Naive thymus-derived CD4-positive, alpha-beta T cell (primary cell): ENCODE measurements at regions of chr6 and their contacts with region 1.

Region 1: DNA sequence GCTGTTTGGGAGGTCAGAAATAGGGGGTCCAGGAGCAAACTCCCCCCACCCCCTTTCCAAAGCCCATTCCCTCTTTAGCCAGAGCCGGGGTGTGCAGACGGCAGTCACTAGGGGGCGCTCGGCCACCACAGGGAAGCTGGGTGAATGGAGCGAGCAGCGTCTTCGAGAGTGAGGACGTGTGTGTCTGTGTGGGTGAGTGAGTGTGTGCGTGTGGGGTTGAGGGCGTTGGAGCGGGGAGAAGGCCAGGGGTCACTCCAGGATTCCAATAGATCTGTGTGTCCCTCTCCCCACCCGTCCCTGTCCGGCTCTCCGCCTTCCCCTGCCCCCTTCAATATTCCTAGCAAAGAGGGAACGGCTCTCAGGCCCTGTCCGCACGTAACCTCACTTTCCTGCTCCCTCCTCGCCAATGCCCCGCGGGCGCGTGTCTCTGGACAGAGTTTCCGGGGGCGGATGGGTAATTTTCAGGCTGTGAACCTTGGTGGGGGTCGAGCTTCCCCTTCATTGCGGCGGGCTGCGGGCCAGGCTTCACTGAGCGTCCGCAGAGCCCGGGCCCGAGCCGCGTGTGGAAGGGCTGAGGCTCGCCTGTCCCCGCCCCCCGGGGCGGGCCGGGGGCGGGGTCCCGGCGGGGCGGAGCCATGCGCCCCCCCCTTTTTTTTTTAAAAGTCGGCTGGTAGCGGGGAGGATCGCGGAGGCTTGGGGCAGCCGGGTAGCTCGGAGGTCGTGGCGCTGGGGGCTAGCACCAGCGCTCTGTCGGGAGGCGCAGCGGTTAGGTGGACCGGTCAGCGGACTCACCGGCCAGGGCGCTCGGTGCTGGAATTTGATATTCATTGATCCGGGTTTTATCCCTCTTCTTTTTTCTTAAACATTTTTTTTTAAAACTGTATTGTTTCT is at the start of gene VEGFA:
- DNase-seq: peak; percentile 79 to 93 (median 86)
- ATAC-seq: peak; percentile 91
- H3K4me3 ChIP-seq: peak within 1 kb of the TSS; percentile 73
- H3K4me3 Mint-ChIP-seq: peak within 1 kb of the TSS; percentile 88 to 99 (median 94)
- H3K27ac ChIP-seq: peak within 1 kb of the TSS; percentile 45
- H3K27ac Mint-ChIP-seq: peak within 1 kb of the TSS in 8 of 9 donors; percentile 70 to 85 (median 84)
- H3K4me1 ChIP-seq: peaks cover 3 to 4% of the 10 kb centered on the region in 2 donors
- H3K4me1 Mint-ChIP-seq: peaks cover 8 to 34% (median 16%) of the 10 kb centered on the region in 7 donors
- H3K27me3 ChIP-seq: peaks cover 6 to 8% of the 10 kb centered on the region in 2 donors
- H3K27me3 Mint-ChIP-seq: peaks cover 7 to 21% (median 16%) of the 10 kb centered on the region in 5 donors
- total RNA-seq, gene VEGFA: 0.60 to 72.1 (median 19.4) TPM

Region 2: GRCh38 chr6:43516697-43517504 is 252.9 kb before region 1 on chr6 and contains the starts of genes POLR1C and YIPF3:
- CTCF ChIA-PET with region 1: no interaction called
- POLR2A ChIA-PET with region 1: no interaction called
- intact Hi-C with region 1: loop called in 1 of 2 experiments (anchors 5 kb)
- DNase-seq: peak; percentile 83 to 97 (median 96)
- ATAC-seq: peak; percentile 95
- H3K4me3 ChIP-seq: peak within 1 kb of the TSS; percentile 100
- H3K4me3 Mint-ChIP-seq: no peak within 1 kb of the TSS
- H3K27ac ChIP-seq: peak within 1 kb of the TSS; percentile 96
- H3K27ac Mint-ChIP-seq: no peak within 1 kb of the TSS
- H3K4me1 ChIP-seq: peaks cover 32 to 36% of the 10 kb centered on the region in 2 donors
- H3K4me1 Mint-ChIP-seq: peaks cover 8 to 36% (median 31%) of the 10 kb centered on the region in 7 donors
- H3K27me3 ChIP-seq: no peaks in the 10 kb centered on the region
- H3K27me3 Mint-ChIP-seq: no peaks in the 10 kb centered on the region
- total RNA-seq, gene POLR1C: 36.3 to 61.1 (median 40.9) TPM
- total RNA-seq, gene YIPF3: 54.4 to 75.9 (median 67.3) TPM

Region 3: DNA sequence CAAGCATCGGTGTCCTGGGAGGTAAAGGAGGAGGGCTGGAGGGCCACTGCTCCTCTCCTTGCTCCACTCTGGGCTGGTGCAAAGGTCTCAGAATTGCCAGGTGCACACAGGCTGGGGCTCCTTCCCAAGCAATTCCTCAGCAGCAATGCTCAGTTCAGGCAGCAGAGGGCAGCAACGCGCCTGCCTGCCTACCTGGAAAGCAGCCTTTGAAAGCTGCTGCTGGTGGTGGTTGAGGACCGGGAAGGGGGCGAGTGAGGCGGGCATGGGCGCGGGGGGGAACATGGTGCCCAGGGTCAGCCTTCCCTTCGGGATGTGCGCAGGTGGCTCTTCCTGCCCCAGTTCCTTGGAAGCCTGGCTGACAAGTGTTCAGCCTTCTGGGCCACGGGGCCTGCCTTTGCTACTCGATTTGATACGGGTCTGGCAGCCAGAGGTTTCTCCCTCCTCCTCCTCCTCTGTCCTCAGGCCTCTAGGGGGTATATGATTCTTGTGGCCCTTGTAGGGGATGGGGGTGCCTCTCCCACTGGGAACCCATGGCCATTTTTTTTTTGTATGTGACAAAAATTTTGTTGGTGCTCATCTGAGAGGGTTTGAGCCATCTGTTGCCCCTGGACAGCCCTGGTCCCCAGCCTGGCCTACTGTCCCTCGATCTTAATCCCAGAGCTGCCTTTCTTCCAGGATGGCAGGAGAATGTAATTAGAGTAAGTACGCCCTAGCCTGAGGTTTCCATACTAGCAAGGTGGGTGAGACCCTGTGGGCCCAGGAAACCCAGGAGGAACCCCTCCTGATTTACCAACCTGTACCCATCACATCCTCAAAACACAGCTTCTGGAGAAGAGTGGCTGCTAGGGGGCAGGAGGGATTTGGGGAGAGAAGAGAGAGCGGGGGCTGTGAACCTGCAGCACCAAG is 102.3 kb before region 1 on chr6:
- CTCF ChIA-PET with region 1: interaction called, 3 read pairs
- POLR2A ChIA-PET with region 1: no interaction called
- intact Hi-C with region 1: loop called (anchors 1 to 2 kb)
- DNase-seq: peak; percentile 63 to 85 (median 77)
- ATAC-seq: peak; percentile 87
- H3K4me3 ChIP-seq: no peak overlapping the region
- H3K4me3 Mint-ChIP-seq: peak overlapping the region in 9 of 10 donors; percentile 23 to 79 (median 64)
- H3K27ac ChIP-seq: peak overlapping the region; percentile 10
- H3K27ac Mint-ChIP-seq: peak overlapping the region in 7 of 9 donors; percentile 22 to 89 (median 68)
- H3K4me1 ChIP-seq: peaks cover 8 to 9% of the 10 kb centered on the region in 2 donors
- H3K4me1 Mint-ChIP-seq: peaks cover 14 to 45% (median 18%) of the 10 kb centered on the region in 7 donors
- H3K27me3 ChIP-seq: no peaks in the 10 kb centered on the region
- H3K27me3 Mint-ChIP-seq: no peaks in the 10 kb centered on the region

Region 4: GRCh38 chr6:43723737-43724295 is 46.0 kb before region 1 on chr6:
- CTCF ChIA-PET with region 1: interaction called, 23 read pairs
- POLR2A ChIA-PET with region 1: interaction called, 3 read pairs
- intact Hi-C with region 1: loop called (anchors 1 kb)
- DNase-seq: peak; percentile 42 to 68 (median 60)
- ATAC-seq: peak; percentile 77
- H3K4me3 ChIP-seq: no peak overlapping the region
- H3K4me3 Mint-ChIP-seq: peak overlapping the region in 3 of 10 donors; percentile 55 to 67 (median 66)
- H3K27ac ChIP-seq: no peak overlapping the region
- H3K27ac Mint-ChIP-seq: peak overlapping the region in 3 of 9 donors; percentile 3 to 97 (median 67)
- H3K4me1 ChIP-seq: peaks cover 19 to 23% of the 10 kb centered on the region in 2 donors
- H3K4me1 Mint-ChIP-seq: peaks cover 20 to 38% (median 29%) of the 10 kb centered on the region in 7 donors
- H3K27me3 ChIP-seq: no peaks in the 10 kb centered on the region
- H3K27me3 Mint-ChIP-seq: peaks cover 0 to 7% (median 0%) of the 10 kb centered on the region in 5 donors

Region 5: GRCh38 chr6:43749461-43749860 is 20.3 kb before region 1 on chr6:
- CTCF ChIA-PET with region 1: no interaction called
- POLR2A ChIA-PET with region 1: no interaction called
- intact Hi-C with region 1: no loop called
- DNase-seq: peak in 1 of 9 donors; percentile 10
- ATAC-seq: no peak
- H3K4me3 ChIP-seq: no peak overlapping the region
- H3K4me3 Mint-ChIP-seq: no peak overlapping the region
- H3K27ac ChIP-seq: no peak overlapping the region
- H3K27ac Mint-ChIP-seq: no peak overlapping the region
- H3K4me1 ChIP-seq: no peaks in the 10 kb centered on the region
- H3K4me1 Mint-ChIP-seq: peaks cover 0 to 2% (median 0%) of the 10 kb centered on the region in 7 donors
- H3K27me3 ChIP-seq: no peaks in the 10 kb centered on the region
- H3K27me3 Mint-ChIP-seq: peaks cover 0 to 25% (median 8%) of the 10 kb centered on the region in 5 donors

Region 6: GRCh38 chr6:44002593-44003344 is 233.0 kb after region 1 on chr6:
- CTCF ChIA-PET with region 1: no interaction called
- POLR2A ChIA-PET with region 1: no interaction called
- intact Hi-C with region 1: loop called (anchors 2 to 5 kb)
- DNase-seq: peak; percentile 18 to 75 (median 45)
- ATAC-seq: peak; percentile 69
- H3K4me3 ChIP-seq: peak overlapping the region; percentile 44
- H3K4me3 Mint-ChIP-seq: peak overlapping the region; percentile 58 to 81 (median 74)
- H3K27ac ChIP-seq: no peak overlapping the region
- H3K27ac Mint-ChIP-seq: no peak overlapping the region
- H3K4me1 ChIP-seq: peaks cover 3 to 4% of the 10 kb centered on the region in 2 donors
- H3K4me1 Mint-ChIP-seq: peaks cover 0 to 20% (median 8%) of the 10 kb centered on the region in 7 donors
- H3K27me3 ChIP-seq: peaks cover 0 to 5% of the 10 kb centered on the region in 2 donors
- H3K27me3 Mint-ChIP-seq: peaks cover 22 to 46% (median 37%) of the 10 kb centered on the region in 5 donors

Region 7: DNA sequence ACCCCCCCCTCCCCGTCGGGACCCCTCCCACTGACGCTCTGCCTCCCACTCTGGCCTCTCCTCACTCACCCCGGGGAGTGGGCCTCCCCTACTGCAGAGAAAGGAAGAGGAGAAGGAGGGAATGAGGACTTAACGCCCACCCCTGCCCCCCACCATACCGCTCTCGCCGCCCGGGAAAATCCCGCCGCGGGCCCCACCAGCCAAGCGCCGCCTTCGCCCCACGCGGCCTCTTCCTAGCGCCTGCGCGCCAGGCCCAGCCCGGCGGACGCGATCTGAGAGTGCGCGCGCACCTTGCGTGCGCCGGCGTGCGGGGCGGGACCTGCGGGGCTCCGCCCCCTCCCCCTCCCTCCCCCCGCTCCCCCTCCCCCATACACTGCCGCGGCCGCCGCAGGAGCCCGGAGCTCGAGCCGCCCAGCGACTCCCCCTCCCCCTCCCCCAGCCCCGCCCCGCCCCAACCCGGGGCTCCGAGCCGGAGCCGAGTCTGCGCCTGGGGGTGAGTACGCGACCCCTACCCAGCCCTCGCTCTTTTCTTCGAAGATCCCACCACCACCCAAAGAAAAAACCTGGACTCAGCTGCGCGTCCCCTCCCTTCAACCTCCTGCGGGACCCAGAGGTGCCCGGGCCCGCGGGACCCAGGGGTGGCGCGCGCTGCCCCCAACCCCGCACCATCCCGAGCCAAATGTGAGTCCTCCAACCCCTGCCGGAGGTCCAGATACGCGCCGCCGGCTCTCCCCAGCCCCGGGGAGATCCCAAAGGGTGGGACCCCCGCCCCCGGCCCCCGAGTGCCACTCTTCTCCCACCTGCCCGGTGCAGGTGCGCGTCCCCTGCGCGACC is 357.6 kb after region 1 on chr6 and contains the starts of genes MRPL14 and TMEM63B:
- CTCF ChIA-PET with region 1: no interaction called
- POLR2A ChIA-PET with region 1: no interaction called
- intact Hi-C with region 1: loop called (anchors 1 kb)
- DNase-seq: peak; percentile 82 to 97 (median 90)
- ATAC-seq: peak; percentile 91
- H3K4me3 ChIP-seq: peak within 1 kb of the TSS; percentile 71
- H3K4me3 Mint-ChIP-seq: peak within 1 kb of the TSS; percentile 91 to 99 (median 96)
- H3K27ac ChIP-seq: peak within 1 kb of the TSS; percentile 97
- H3K27ac Mint-ChIP-seq: peak within 1 kb of the TSS; percentile 87 to 99 (median 96)
- H3K4me1 ChIP-seq: peaks cover 36 to 41% of the 10 kb centered on the region in 2 donors
- H3K4me1 Mint-ChIP-seq: peaks cover 46 to 75% (median 57%) of the 10 kb centered on the region in 7 donors
- H3K27me3 ChIP-seq: no peaks in the 10 kb centered on the region
- H3K27me3 Mint-ChIP-seq: no peaks in the 10 kb centered on the region
- total RNA-seq, gene MRPL14: 12.6 to 58.3 (median 15.8) TPM
- total RNA-seq, gene TMEM63B: 16.2 to 21.4 (median 18.1) TPM

Region 8: GRCh38 chr6:44246663-44247337 is 477.0 kb after region 1 on chr6 and contains the start of gene HSP90AB1:
- CTCF ChIA-PET with region 1: no interaction called
- POLR2A ChIA-PET with region 1: no interaction called
- intact Hi-C with region 1: loop called in 1 of 2 experiments (anchors 2 kb)
- DNase-seq: peak; percentile 78 to 98 (median 97)
- ATAC-seq: peak; percentile 90
- H3K4me3 ChIP-seq: peak within 1 kb of the TSS; percentile 99
- H3K4me3 Mint-ChIP-seq: peak within 1 kb of the TSS; percentile 94 to 99 (median 98)
- H3K27ac ChIP-seq: peak within 1 kb of the TSS; percentile 93
- H3K27ac Mint-ChIP-seq: peak within 1 kb of the TSS; percentile 96 to 100 (median 98)
- H3K4me1 ChIP-seq: peaks cover 15 to 19% of the 10 kb centered on the region in 2 donors
- H3K4me1 Mint-ChIP-seq: peaks cover 29 to 53% (median 44%) of the 10 kb centered on the region in 7 donors
- H3K27me3 ChIP-seq: no peaks in the 10 kb centered on the region
- H3K27me3 Mint-ChIP-seq: peaks cover 0 to 12% (median 0%) of the 10 kb centered on the region in 5 donors
- total RNA-seq, gene HSP90AB1: 345 to 750 (median 366) TPM